T-cell (primary cell): ENCODE measurements at regions of chr1 and their contacts with region 1.

Region 1: DNA sequence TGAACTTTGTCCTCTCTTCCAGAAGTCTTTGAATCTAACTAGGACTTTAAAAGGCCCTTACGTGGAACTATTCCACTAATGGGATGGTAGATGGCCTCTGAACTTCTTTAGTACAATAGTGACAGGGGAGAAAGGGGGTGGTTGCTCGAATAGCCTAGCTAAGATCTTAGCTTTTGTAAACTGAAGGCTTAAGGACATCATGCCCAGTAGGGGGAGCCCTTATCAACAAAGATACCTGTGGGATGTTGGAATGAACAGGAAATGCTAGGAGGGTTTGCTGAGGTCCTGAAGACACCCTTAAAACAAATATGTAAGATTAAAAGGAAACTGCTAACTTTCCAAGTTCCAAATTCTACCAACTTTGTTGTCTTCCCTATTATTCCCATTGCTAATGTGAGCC is 33.2 kb downstream of the NHLH2 start:
- DNase-seq: peak in 14 of 35 experiments; percentile 3 to 68 (median 19)
- ATAC-seq: peak in 1 of 4 experiments; percentile 48
- H3K4me3 ChIP-seq: no peak overlapping the region
- H3K4me3 Mint-ChIP-seq: no peak overlapping the region
- H3K27ac ChIP-seq: no peak overlapping the region
- H3K27ac Mint-ChIP-seq: no peak overlapping the region
- H3K4me1 ChIP-seq: no peaks in the 10 kb centered on the region
- H3K4me1 Mint-ChIP-seq: no peaks in the 10 kb centered on the region
- H3K27me3 ChIP-seq: no peaks in the 10 kb centered on the region
- H3K27me3 Mint-ChIP-seq: peaks cover 15% of the 10 kb centered on the region in 2 donors

Region 2: GRCh38 chr1:115829023-115829693 is 21.4 kb after region 1 on chr1:
- CTCF ChIA-PET with region 1: no interaction called
- POLR2A ChIA-PET with region 1: no interaction called
- DNase-seq: no peak
- ATAC-seq: no peak
- H3K4me3 ChIP-seq: peak overlapping the region in 1 of 2 donors; percentile 80
- H3K4me3 Mint-ChIP-seq: peak overlapping the region; percentile 29 to 71 (median 61)
- H3K27ac ChIP-seq: no peak overlapping the region
- H3K27ac Mint-ChIP-seq: peak overlapping the region in 1 of 2 donors; percentile 1
- H3K4me1 ChIP-seq: peaks cover 0 to 5% of the 10 kb centered on the region in 2 experiments
- H3K4me1 Mint-ChIP-seq: peaks cover 6 to 11% (median 9%) of the 10 kb centered on the region in 3 donors
- H3K27me3 ChIP-seq: peaks cover 2 to 31% of the 10 kb centered on the region in 2 experiments
- H3K27me3 Mint-ChIP-seq: peaks cover 54 to 66% of the 10 kb centered on the region in 2 donors

Region 3: DNA sequence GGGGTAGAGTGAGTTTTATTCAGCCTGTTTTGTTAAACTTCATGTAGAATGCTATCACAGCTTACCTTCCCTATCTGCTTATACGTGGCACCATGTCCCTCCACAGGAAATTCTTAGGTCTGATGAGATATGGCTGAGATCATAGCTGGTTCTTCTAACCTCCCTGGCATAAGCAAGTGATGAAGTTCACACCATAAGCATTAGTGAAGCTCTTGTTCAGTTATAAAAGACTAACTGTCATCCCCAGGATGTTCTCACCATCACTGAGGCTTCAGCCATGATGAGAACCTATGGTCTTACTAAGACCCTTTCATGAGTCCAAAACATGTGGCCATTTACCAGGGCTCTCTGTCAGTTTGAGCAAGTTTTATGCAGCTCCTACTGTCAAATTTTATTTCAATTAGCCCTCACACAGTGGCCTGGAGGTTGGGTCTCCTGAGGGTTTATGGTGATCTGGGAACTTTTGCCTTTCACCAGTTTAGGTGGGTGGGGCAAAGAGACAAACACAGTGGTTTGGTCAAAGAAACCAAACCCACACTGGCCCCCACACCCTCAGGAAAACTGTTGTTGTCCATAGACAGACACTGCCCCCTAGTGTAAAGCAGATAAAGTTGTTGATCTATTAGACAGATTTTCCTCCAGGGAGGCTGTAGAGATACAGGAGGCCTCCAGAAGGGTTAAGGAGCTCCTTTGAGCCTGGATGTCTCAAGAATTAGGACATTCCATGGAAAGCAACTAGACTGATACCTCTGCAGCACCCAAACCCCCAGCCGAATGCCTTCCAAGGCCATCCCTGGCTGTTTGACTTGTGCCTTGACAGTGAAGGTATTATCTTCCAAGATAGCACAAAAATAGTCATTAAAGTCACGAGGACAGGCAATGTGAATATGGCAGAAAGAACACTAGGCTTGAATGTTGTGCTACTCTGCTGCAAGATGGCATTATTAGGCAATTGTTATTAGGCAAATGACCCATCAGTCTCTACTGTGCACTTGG is 173.6 kb after region 1 on chr1:
- CTCF ChIA-PET with region 1: interaction called in 1 of 2 experiments, 12 read pairs
- POLR2A ChIA-PET with region 1: no interaction called
- DNase-seq: peak in 2 of 35 experiments; percentile 6 to 40
- ATAC-seq: peak in 2 of 4 experiments; percentile 15 to 38
- H3K4me3 ChIP-seq: no peak overlapping the region
- H3K4me3 Mint-ChIP-seq: no peak overlapping the region
- H3K27ac ChIP-seq: no peak overlapping the region
- H3K27ac Mint-ChIP-seq: no peak overlapping the region
- H3K4me1 ChIP-seq: peaks cover 0 to 3% of the 10 kb centered on the region in 2 experiments
- H3K4me1 Mint-ChIP-seq: peaks cover 1 to 9% (median 5%) of the 10 kb centered on the region in 3 donors
- H3K27me3 ChIP-seq: peaks cover 0 to 2% of the 10 kb centered on the region in 2 experiments
- H3K27me3 Mint-ChIP-seq: peaks cover 13 to 17% of the 10 kb centered on the region in 2 donors

Region 4: GRCh38 chr1:116020668-116021275 is 213.0 kb after region 1 on chr1:
- CTCF ChIA-PET with region 1: interaction called, 3 to 11 read pairs
- POLR2A ChIA-PET with region 1: no interaction called
- DNase-seq: peak in 32 of 35 experiments; percentile 9 to 65 (median 32)
- ATAC-seq: peak in 3 of 4 experiments; percentile 42 to 61 (median 58)
- H3K4me3 ChIP-seq: no peak overlapping the region
- H3K4me3 Mint-ChIP-seq: no peak overlapping the region
- H3K27ac ChIP-seq: no peak overlapping the region
- H3K27ac Mint-ChIP-seq: no peak overlapping the region
- H3K4me1 ChIP-seq: no peaks in the 10 kb centered on the region
- H3K4me1 Mint-ChIP-seq: peaks cover 0 to 2% (median 0%) of the 10 kb centered on the region in 3 donors
- H3K27me3 ChIP-seq: no peaks in the 10 kb centered on the region
- H3K27me3 Mint-ChIP-seq: peaks cover 2 to 3% of the 10 kb centered on the region in 2 donors